Activated T-helper 2 cell treated with anti-CD3 and anti-CD28 coated beads, Interferon-gamma antibody, Interleukin-2, Interleukin-4, amounts not matched to agents 10 μg/mL and 5 μg/mL and 100 μg/mL, durations not matched to agents 14 hours and 24 hours and 36 hours (primary cell): ENCODE measurements at regions of chr6 and their contacts with region 1.

Region 1: DNA sequence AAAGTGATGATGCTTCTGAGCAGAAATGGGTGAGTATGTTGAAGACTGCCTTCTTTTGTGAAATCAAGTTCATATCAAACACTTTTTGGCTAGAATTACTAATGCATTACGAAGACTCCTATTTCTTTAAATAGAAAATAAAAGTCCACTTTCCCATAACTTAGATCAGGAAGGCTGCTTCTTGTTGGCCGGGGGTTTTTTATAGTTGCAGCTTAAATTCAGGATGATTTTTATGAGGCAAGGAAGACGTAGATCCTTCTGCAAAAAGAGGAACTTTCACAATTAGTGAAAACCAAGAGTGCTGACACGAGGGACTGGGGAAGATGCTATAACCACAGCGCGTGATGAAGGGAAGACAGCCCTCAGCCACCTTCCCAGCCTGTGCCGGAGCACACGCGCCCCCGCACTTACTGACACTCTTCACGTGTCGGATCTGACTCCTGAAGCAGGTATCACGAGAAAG is 206.1 kb upstream of the PRDM1 start:
- DNase-seq: no peak
- H3K4me3 Mint-ChIP-seq: peak overlapping the region; percentile 43
- H3K27ac Mint-ChIP-seq: peak overlapping the region; percentile 21
- H3K4me1 Mint-ChIP-seq: peaks cover 58% of the 10 kb centered on the region
- H3K27me3 Mint-ChIP-seq: peaks cover 4% of the 10 kb centered on the region

Region 2: DNA sequence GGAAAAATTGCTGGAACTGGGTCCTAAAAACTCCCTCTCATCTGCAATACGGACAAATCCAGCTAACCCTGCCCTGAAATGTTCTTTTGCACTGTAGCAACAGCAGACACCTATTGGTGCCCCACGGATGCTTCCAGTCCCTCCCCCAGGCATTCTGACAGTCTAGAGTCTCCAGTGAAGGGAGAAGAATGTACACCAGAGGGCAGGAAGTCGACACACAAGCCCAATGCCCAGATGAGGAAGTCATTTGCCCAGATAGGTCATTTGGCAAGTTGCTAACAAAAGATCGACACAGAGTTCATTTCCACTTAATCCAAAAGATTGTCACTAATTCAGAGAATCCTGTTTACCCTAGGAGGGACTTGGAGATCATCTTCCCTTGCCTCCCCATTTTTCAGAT is 86.9 kb before region 1 on chr6:
- intact Hi-C with region 1: loop called (anchors 5 kb)
- DNase-seq: no peak
- H3K4me3 Mint-ChIP-seq: no peak overlapping the region
- H3K27ac Mint-ChIP-seq: peak overlapping the region; percentile 34
- H3K4me1 Mint-ChIP-seq: peaks cover 86% of the 10 kb centered on the region
- H3K27me3 Mint-ChIP-seq: no peaks in the 10 kb centered on the region

Region 3: GRCh38 chr6:105981002-105981887 is 101.2 kb after region 1 on chr6:
- intact Hi-C with region 1: loop called (anchors 2 kb)
- DNase-seq: peak; percentile 36
- H3K4me3 Mint-ChIP-seq: peak overlapping the region; percentile 74
- H3K27ac Mint-ChIP-seq: peak overlapping the region; percentile 85
- H3K4me1 Mint-ChIP-seq: peaks cover 56% of the 10 kb centered on the region
- H3K27me3 Mint-ChIP-seq: peaks cover 3% of the 10 kb centered on the region

Region 4: DNA sequence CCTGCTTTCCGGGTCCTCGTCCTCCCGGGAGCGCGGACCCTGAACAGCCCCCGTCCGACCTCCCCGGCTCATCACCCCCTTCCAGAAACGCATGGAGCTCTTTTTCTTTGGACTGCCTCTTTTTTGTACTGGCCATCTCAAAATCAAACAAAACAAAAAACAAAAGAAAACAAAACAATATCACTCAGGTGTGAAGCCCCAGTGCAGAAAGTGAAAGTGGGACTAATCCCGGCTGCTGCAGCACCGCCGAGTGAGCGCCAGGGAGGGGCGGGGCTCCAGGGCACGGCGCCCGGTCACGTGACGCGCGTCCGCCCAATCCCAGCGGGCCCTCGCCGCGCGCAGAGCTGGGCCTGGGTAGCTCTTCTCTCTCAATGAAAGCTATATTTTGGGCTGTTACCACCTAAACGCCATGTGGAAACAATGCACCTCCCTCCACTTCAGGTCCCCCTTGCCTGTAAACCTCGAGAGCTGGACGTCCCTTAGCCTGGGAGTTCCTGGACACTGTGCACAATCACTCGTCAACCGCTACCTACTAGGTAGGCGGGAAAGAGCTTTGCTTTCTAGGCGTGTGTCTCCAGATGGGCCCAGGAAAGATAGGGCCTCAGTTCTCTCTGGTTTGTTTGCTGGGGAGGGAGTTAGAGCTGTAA is 112.4 kb after region 1 on chr6:
- intact Hi-C with region 1: no loop called
- DNase-seq: peak; percentile 89
- H3K4me3 Mint-ChIP-seq: peak overlapping the region; percentile 94
- H3K27ac Mint-ChIP-seq: peak overlapping the region; percentile 81
- H3K4me1 Mint-ChIP-seq: peaks cover 57% of the 10 kb centered on the region
- H3K27me3 Mint-ChIP-seq: peaks cover 23% of the 10 kb centered on the region